AG04449 (cell line): ENCODE measurements at regions of chr4 and their contacts with region 1.

Region 1: DNA sequence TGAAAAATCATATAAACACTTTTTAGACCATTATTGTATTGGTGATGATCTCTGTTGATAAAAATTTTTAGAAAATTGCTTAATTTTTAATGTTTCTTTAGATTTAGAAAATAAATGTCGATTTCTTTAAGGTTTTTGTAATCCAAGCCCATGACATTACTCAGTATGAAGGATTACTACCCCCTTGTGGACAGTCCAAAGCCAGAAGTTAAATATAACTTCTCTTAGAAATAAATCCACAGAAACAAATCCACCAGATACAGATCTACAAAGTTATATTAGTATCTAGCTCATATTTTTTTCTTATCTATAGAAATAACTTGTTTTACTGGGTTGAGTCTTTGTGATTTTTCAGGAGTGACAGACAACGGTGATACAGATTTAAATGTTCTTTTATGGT is 18.9 kb downstream of the TIFA start:
- DNase-seq: no peak
- H3K4me3 ChIP-seq: no peak overlapping the region
- CTCF ChIP-seq: no peak

Region 2: DNA sequence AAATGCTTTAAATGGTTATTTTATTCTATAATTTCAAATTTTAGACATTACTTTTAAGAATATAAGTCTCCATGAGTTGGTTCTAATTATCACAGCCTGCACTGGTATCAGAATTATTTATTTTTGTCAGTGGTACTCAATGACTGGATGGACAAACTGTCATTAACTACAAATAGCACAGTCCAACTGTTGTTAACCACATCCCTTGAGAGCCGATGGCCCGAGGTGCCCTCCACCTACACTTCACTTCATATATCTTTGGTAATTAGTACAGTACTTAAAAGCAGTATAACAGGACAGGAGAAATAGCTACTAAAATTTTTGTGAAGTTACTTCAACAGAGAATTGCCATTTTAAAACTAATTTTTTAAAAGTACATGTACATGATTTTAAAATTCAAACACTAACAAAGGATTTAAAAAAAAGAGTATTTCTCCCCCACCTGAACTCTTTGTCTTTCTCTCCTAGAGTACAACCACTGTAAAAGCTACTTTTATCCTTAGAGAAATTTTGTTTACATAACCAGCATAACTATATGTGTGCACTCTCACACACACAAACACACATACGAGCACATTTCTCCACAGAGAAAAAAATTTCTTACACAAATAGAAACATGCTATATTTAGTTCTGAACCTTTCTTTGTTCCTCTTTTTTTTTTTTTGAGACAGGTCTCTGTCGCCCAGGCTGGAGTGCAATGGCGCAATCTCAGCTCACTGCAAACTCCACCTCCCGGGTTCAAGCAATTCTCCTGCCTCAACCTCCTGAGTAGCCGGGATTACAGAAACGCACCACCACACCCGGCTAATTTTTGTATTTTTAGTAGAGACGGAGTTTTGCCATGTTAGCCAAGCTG is 12.4 kb after region 1 on chr4:
- CTCF ChIA-PET with region 1: interaction called, 15 read pairs
- POLR2A ChIA-PET with region 1: no interaction called
- DNase-seq: no peak
- H3K4me3 ChIP-seq: no peak overlapping the region
- CTCF ChIP-seq: no peak

Region 3: GRCh38 chr4:112296949-112297880 is 30.4 kb after region 1 on chr4 and contains the start of gene ALPK1:
- CTCF ChIA-PET with region 1: no interaction called
- POLR2A ChIA-PET with region 1: no interaction called
- DNase-seq: peak; percentile 70
- H3K4me3 ChIP-seq: peak within 1 kb of the TSS; percentile 34
- CTCF ChIP-seq: no peak